Gastrocnemius medialis (tissue), 4 donors: ENCODE measurements at regions of chr10 and their contacts with region 1.

Region 1: DNA sequence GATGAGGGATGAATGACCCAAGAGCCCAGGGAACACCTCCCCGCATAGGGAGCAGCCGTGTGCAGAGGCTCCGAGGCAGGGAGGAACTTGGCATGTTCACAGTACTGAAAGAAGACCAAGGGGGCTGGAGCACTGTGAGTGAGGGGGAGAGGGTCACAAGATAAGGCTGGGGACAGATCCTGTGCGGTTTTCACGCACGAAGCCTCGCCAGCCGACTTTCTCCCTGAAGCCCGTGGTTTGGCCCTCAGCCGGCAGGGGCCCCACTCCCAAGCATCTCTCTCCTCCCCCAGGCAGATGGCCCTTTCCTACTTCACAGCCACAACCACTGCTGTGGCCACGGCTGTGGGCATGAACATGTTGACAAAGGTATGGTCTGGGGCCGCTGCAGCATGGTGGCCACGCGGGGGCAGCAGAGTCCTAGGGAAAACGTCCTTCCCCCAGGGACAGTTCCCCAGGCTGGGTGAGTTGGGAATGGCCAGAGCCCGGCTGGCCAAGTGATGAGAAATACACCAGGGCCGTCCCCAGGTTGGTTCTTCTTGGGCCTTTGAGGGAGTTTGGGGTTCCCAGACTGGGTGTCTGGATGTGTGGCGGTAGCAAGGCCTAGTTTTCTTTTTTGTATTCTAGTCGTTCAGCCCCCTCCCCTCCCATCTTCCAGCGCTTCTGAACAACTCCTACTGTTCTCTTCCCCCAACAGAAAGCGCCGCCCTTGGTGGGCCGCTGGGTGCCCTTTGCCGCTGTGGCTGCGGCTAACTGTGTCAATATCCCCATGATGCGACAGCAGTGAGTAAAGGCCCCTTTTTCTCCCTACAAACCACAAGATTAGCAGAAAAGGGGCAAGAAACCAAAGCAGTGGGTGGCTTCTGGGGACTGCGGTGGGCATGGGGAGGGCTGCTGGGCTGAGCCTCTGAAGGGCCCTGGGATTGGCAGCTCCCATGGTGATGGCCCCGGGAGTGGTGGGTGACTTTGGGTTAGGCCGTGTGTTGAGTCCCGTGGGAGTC is 14.4 kb upstream of the WBP1L start:
- DNase-seq: peak; percentile 66 to 85
- ATAC-seq: peak; percentile 91 to 96
- H3K4me3 ChIP-seq: no peak overlapping the region
- H3K27ac ChIP-seq: no peak overlapping the region
- H3K4me1 ChIP-seq: peaks cover 0 to 4% of the 10 kb centered on the region in 2 donors
- H3K27me3 ChIP-seq: no peaks in the 10 kb centered on the region
- CTCF ChIP-seq: peak; percentile 93 to 96 (median 95)
- POLR2A ChIP-seq: no peak

Region 2: GRCh38 chr10:102660888-102661657 is 68.3 kb before region 1 on chr10:
- in situ Hi-C with region 1: no loop called
- intact Hi-C with region 1: no loop called
- DNase-seq: peak in 1 of 2 donors; percentile 56
- ATAC-seq: peak; percentile 38 to 52
- H3K4me3 ChIP-seq: no peak overlapping the region
- H3K27ac ChIP-seq: peak overlapping the region in 3 of 4 donors; percentile 22 to 34 (median 23)
- H3K4me1 ChIP-seq: peaks cover 17 to 24% of the 10 kb centered on the region in 2 donors
- H3K27me3 ChIP-seq: no peaks in the 10 kb centered on the region
- CTCF ChIP-seq: no peak
- POLR2A ChIP-seq: no peak

Region 3: GRCh38 chr10:102853944-102854694 is 124.8 kb after region 1 on chr10 and contains the start of gene BORCS7:
- in situ Hi-C with region 1: no loop called
- intact Hi-C with region 1: loop called (anchors 5 kb)
- DNase-seq: peak; percentile 95
- ATAC-seq: peak; percentile 100
- H3K4me3 ChIP-seq: peak within 1 kb of the TSS; percentile 75 to 95 (median 84)
- H3K27ac ChIP-seq: peak within 1 kb of the TSS; percentile 94 to 96 (median 96)
- H3K4me1 ChIP-seq: peaks cover 14% of the 10 kb centered on the region in 2 donors
- H3K27me3 ChIP-seq: no peaks in the 10 kb centered on the region
- CTCF ChIP-seq: peak in 1 of 5 experiments; percentile 12
- POLR2A ChIP-seq: peak; percentile 77
- total RNA-seq, gene BORCS7: 18.1 to 38.2 (median 27.1) TPM

Region 4: DNA sequence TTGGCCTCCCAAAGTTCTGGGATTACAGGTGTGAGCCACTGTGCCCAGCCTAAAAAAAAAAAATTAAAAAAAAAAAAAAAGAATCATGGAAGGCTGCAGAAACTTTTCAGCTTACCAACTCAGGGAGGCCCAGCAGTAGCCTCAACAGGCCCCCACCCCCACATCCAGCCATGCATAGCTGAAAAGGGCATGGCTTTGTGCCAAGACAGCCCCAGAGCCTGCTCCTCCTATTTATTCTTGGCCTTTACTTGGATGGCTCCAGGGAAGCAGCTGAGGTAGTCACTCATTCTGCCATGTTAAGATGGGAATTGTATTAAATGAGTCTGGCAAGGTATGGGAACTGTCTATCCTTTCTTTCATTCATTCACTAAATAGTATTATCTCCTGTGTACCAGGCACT is 175.0 kb after region 1 on chr10:
- in situ Hi-C with region 1: loop called (anchors 5 to 10 kb)
- intact Hi-C with region 1: loop called (anchors 1 kb)
- DNase-seq: no peak
- ATAC-seq: no peak
- H3K4me3 ChIP-seq: no peak overlapping the region
- H3K27ac ChIP-seq: no peak overlapping the region
- H3K4me1 ChIP-seq: no peaks in the 10 kb centered on the region
- H3K27me3 ChIP-seq: no peaks in the 10 kb centered on the region
- CTCF ChIP-seq: no peak
- POLR2A ChIP-seq: no peak

Region 5: DNA sequence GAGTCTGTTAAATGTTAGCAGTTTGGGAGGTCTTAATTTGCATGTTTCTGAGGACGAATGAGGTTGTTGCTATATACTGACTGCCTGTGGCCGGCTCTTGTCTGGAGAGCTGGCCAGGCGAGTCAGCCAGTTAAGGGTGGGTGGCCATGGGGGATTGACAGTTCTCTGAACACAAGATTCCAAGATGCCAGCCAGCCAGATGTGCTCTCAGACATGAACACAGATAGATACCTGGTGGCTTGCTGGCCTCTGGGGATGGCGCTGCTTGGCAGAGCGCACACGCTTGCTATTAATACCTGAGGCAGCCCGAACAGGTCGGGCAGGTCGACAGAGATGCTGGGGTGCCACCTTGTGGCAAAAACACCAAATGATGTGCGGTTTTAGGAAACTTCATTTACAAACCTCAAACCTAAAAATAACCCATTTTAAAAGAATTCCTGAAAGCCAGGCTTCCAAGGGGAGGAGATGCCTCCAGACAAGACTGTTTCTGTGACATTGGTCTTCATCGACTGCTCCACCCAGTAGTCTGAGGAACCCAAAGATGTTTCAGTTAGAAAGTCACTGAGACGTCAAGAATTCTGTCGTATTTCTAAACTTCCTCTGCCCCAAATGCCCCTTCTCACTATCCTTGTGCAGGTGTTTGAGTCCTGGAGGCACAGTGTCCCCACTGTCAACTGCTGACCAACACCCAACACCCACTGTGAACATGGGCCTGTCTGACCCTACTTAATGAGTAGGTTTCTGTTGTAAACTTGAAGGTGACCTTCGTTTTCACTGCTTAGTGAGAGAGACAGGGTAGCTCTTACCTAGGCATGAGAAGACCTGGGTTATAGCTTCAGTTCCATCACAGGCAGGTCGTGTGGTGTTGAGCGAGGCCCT is 340.4 kb after region 1 on chr10:
- in situ Hi-C with region 1: loop called in 2 of 4 experiments (anchors 25 kb)
- intact Hi-C with region 1: loop called (anchors 10 kb)
- DNase-seq: peak in 1 of 2 donors; percentile 49
- ATAC-seq: peak in 1 of 2 donors; percentile 66
- H3K4me3 ChIP-seq: no peak overlapping the region
- H3K27ac ChIP-seq: no peak overlapping the region
- H3K4me1 ChIP-seq: no peaks in the 10 kb centered on the region
- H3K27me3 ChIP-seq: no peaks in the 10 kb centered on the region
- CTCF ChIP-seq: peak; percentile 11 to 66 (median 58)
- POLR2A ChIP-seq: no peak

Region 6: GRCh38 chr10:103333925-103334520 is 604.7 kb after region 1 on chr10:
- in situ Hi-C with region 1: no loop called
- intact Hi-C with region 1: loop called (anchors 1 kb)
- DNase-seq: no peak
- ATAC-seq: no peak
- H3K4me3 ChIP-seq: no peak overlapping the region
- H3K27ac ChIP-seq: no peak overlapping the region
- H3K4me1 ChIP-seq: no peaks in the 10 kb centered on the region
- H3K27me3 ChIP-seq: no peaks in the 10 kb centered on the region
- CTCF ChIP-seq: peak; percentile 36 to 61 (median 49)
- POLR2A ChIP-seq: no peak